ENCODE measurements at regions of chr19 and their contacts with region 1.

Region 1: GRCh38 chr19:4803736-4804695 is 12.5 kb downstream of the FEM1A start:
- DNase-seq: no peak
- H3K4me3 ChIP-seq: no peak overlapping the region
- H3K27ac ChIP-seq: no peak overlapping the region
- H3K4me1 ChIP-seq: peaks cover 10% of the 10 kb centered on the region
- H3K27me3 ChIP-seq: no peaks in the 10 kb centered on the region
- CTCF ChIP-seq: peak; percentile 63 to 84

Region 2: DNA sequence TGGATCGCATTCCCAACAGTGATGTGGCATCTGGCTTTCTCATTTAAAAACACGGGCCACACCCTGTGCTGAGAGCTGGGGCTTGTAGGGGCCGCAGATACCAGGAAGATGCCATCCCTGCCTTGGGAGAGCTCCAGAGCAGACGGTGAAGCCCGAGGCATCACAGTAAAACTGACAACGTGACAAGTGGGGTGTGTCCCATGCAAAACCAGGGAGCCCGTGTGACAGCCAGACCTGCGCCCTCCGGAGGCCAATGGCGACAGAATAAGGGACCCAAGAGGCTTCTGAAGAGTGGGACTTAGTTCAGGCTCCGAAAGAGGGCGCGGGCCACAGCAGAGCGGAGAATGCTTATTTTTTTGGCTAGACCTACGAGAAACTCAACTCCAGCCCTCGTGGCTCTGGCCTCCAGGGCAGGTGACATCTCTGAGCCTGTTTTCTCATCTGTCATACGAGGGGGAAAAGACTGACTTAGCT is 103.5 kb before region 1 on chr19:
- CTCF ChIA-PET with region 1: no interaction called
- dilution Hi-C with region 1: loop called (anchors 5 kb)
- in situ Hi-C with region 1: no loop called
- intact Hi-C with region 1: no loop called
- DNase-seq: no peak
- H3K4me3 ChIP-seq: no peak overlapping the region
- H3K27ac ChIP-seq: no peak overlapping the region
- H3K4me1 ChIP-seq: peaks cover 25% of the 10 kb centered on the region
- H3K27me3 ChIP-seq: no peaks in the 10 kb centered on the region
- CTCF ChIP-seq: no peak

Region 3: DNA sequence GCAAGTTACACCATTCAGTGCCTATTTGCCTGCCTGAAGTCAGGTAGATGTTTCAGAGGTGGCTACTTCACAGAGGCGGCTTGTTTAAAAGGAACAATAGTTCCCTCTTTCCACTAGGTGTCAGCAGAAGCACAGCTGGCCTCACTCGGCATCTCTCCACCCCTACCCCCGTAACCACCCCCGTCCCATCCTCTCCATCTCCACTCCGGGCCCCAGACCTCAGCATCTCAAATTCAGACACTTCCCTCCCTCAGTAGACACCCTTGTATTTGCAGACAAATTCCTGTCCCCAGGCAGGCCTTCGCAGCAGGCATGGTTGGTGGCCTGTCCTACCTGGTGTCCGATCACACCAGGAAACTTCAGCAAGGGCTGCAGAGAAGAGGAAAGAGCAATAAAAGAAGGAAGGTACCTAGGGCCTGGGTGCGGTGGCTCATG is 71.3 kb before region 1 on chr19:
- CTCF ChIA-PET with region 1: no interaction called
- dilution Hi-C with region 1: no loop called
- in situ Hi-C with region 1: no loop called
- intact Hi-C with region 1: loop called (anchors 1 kb)
- DNase-seq: peak; percentile 43
- H3K4me3 ChIP-seq: no peak overlapping the region
- H3K27ac ChIP-seq: no peak overlapping the region
- H3K4me1 ChIP-seq: no peaks in the 10 kb centered on the region
- H3K27me3 ChIP-seq: peaks cover 2% of the 10 kb centered on the region
- CTCF ChIP-seq: peak; percentile 56 to 86

Region 4: DNA sequence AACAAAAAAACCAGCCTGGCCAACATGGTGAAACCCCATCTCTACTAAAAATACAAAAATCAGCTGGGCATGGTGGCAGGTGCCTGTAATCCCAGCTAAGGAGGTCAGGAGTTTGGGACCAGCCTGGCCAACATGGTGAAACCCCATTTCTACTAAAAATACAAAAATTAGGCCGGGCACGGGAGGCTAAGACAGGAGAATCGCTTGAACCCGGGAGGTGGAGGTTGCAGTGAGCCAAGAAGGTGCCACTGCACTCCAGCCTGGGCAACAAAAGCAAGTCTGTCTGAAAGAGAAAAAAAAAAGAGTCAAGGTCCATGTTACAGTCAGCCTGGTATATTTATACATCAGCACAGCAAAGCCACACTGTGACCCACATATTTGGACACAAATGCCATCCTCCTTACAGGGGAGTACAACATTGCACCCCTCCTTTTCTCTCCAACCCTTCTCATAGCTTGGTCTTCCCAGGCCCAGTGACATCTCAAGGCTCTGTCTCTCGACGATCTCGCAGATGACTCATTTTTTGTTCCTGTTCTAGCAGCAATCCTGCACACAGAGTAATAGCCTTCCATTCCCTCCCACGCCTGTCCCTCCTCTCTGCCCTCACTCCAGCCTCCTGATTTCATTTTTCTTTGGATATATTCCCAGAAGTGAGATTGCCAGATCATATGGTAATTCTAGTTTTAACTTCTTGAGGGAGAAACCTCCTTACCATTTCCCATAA is 59.4 kb before region 1 on chr19:
- CTCF ChIA-PET with region 1: no interaction called
- dilution Hi-C with region 1: loop called (anchors 5 kb)
- in situ Hi-C with region 1: no loop called
- intact Hi-C with region 1: no loop called
- DNase-seq: peak; percentile 84
- H3K4me3 ChIP-seq: no peak overlapping the region
- H3K27ac ChIP-seq: no peak overlapping the region
- H3K4me1 ChIP-seq: peaks cover 5% of the 10 kb centered on the region
- H3K27me3 ChIP-seq: no peaks in the 10 kb centered on the region
- CTCF ChIP-seq: no peak

Region 5: GRCh38 chr19:4867534-4868285 is 63.7 kb after region 1 on chr19 and contains the start of gene PLIN3:
- CTCF ChIA-PET with region 1: no interaction called
- dilution Hi-C with region 1: loop called (anchors 5 kb)
- in situ Hi-C with region 1: no loop called
- intact Hi-C with region 1: loop called (anchors 1 kb)
- DNase-seq: peak; percentile 92
- H3K4me3 ChIP-seq: peak within 1 kb of the TSS; percentile 74 to 100 (median 80)
- H3K27ac ChIP-seq: peak within 1 kb of the TSS; percentile 61
- H3K4me1 ChIP-seq: peaks cover 14% of the 10 kb centered on the region
- H3K27me3 ChIP-seq: no peaks in the 10 kb centered on the region
- CTCF ChIP-seq: no peak
- total RNA-seq, gene PLIN3: 89.4 to 147 TPM

Region 6: DNA sequence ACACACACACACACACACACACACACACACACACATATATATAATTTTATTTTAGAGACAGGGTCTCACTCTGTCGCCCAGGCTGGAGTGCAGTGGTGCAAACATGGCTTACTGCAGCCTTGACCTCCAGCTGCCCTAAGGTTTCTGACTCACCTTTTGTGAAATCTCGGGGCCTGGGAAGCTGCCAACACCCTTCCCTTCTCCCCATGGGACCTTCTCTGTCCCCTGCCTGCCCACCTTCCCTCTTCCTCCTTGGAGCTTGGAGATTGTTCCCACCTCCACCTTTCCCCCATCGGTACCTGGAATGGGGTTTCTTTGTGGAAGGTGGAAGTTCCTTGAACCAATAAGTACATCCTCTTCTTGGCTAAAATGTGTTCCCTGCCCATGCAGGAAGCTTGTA is 92.4 kb after region 1 on chr19:
- CTCF ChIA-PET with region 1: no interaction called
- dilution Hi-C with region 1: no loop called
- in situ Hi-C with region 1: no loop called
- intact Hi-C with region 1: no loop called
- DNase-seq: peak; percentile 44
- H3K4me3 ChIP-seq: no peak overlapping the region
- H3K27ac ChIP-seq: no peak overlapping the region
- H3K4me1 ChIP-seq: peaks cover 11% of the 10 kb centered on the region
- H3K27me3 ChIP-seq: no peaks in the 10 kb centered on the region
- CTCF ChIP-seq: no peak

Region 7: DNA sequence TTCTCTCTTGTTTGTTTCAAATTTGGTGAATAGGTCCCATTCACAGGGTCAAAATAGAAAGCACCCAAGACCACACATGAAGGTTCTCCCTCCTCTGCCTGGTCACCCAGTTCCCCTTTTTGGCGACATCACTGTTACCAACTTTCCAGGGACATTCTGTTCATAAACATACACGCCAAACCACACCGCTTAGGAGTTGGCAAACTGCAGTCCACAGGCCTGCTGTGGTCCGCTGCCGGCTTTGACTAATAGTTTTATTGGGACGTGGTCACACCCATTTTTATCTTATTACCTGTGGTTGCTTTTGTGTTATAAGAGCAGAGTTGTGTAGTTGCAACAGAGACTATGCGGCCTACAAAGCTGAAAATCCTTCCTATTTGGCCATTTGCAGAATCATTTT is 129.5 kb after region 1 on chr19:
- CTCF ChIA-PET with region 1: no interaction called
- dilution Hi-C with region 1: no loop called
- in situ Hi-C with region 1: no loop called
- intact Hi-C with region 1: no loop called
- DNase-seq: peak; percentile 54
- H3K4me3 ChIP-seq: no peak overlapping the region
- H3K27ac ChIP-seq: no peak overlapping the region
- H3K4me1 ChIP-seq: no peaks in the 10 kb centered on the region
- H3K27me3 ChIP-seq: no peaks in the 10 kb centered on the region
- CTCF ChIP-seq: no peak